ENCODE measurements at regions of chrX and their contacts with region 1.

Region 1: DNA sequence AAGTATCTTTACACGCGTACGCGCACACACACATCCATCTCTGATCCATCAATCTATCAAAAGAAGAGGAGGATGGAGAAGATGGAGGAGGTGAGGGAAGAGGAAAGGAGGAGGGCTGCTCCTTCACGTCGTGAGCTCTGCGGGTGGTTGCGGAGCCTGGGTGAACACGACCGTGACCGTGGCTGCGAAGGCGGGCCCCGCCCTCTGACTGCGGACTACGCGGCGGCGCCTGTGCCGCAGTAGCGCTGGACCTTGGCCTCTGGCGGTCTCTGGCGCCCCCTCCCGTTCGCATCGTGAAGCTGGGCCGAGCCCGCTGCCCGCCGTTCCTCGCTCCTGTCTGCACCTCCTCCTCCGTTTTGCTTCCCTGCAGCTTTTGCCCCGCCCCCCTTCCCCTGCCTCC is 37.7 kb upstream of the ARAF start:
- DNase-seq: peak; percentile 83
- ATAC-seq: peak; percentile 98
- H3K4me3 Mint-ChIP-seq: peak overlapping the region; percentile 71
- H3K27ac Mint-ChIP-seq: no peak overlapping the region
- H3K4me1 Mint-ChIP-seq: 0 out of 2 replicates have a peak, but pooled peaks cover 3% of the 10 kb centered on the region
- H3K27me3 Mint-ChIP-seq: peaks cover 9% of the 10 kb centered on the region
- CTCF ChIP-seq: peak; percentile 69

Region 2: GRCh38 chrX:47497273-47497672 is 26.0 kb before region 1 on chrX:
- CTCF ChIA-PET with region 1: interaction called, 45 read pairs
- POLR2A ChIA-PET with region 1: no interaction called
- DNase-seq: no peak
- ATAC-seq: no peak
- H3K4me3 Mint-ChIP-seq: no peak overlapping the region
- H3K27ac Mint-ChIP-seq: peak overlapping the region; percentile 63; the same call in 1 of the 2 replicates
- H3K4me1 Mint-ChIP-seq: peaks cover 26% of the 10 kb centered on the region
- H3K27me3 Mint-ChIP-seq: no peaks in the 10 kb centered on the region
- CTCF ChIP-seq: no peak

Region 3: DNA sequence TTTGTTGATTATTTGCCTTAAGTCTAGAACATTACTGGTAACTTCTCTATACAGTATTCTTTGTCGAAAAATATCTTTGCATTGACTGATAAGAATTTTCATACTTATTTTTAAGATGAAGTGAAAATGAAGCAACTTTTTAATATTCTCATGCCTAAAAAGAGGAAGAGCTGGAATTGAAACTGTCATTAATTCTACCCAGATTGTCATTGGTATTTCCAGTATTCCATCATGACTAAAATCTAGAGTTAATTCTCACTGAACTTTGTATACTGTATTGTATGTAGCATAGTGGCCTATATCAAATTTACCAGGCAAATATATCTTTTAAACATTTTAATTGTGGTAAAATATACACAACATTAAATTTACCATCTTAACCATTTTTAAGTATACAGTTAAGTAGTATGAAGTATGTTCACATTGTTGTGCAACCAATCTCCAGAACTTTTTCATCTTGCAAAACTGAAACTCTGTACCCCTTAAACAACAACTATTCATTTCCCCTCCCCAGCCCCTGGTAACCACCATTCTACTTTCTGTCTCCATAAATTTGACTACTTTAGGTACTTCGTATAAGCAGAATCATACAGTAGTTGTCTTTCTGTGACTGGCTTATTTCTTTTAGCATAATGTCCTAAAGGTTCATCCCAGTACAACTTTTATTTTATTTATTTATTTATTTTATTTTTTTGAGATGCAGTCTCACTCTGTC is 16.0 kb before region 1 on chrX:
- CTCF ChIA-PET with region 1: no interaction called
- POLR2A ChIA-PET with region 1: no interaction called
- DNase-seq: no peak
- ATAC-seq: no peak
- H3K4me3 Mint-ChIP-seq: no peak overlapping the region
- H3K27ac Mint-ChIP-seq: no peak overlapping the region
- H3K4me1 Mint-ChIP-seq: peaks cover 9% of the 10 kb centered on the region
- H3K27me3 Mint-ChIP-seq: no peaks in the 10 kb centered on the region
- CTCF ChIP-seq: no peak